Activated CD4-positive, alpha-beta T cell treated with anti-CD3 and anti-CD28 coated beads, Interleukin-2, amount 10 ng/mL, durations not matched to agents 24 days and 14 days (primary cell): ENCODE measurements at regions of chr6 and their contacts with region 1.

Region 1: DNA sequence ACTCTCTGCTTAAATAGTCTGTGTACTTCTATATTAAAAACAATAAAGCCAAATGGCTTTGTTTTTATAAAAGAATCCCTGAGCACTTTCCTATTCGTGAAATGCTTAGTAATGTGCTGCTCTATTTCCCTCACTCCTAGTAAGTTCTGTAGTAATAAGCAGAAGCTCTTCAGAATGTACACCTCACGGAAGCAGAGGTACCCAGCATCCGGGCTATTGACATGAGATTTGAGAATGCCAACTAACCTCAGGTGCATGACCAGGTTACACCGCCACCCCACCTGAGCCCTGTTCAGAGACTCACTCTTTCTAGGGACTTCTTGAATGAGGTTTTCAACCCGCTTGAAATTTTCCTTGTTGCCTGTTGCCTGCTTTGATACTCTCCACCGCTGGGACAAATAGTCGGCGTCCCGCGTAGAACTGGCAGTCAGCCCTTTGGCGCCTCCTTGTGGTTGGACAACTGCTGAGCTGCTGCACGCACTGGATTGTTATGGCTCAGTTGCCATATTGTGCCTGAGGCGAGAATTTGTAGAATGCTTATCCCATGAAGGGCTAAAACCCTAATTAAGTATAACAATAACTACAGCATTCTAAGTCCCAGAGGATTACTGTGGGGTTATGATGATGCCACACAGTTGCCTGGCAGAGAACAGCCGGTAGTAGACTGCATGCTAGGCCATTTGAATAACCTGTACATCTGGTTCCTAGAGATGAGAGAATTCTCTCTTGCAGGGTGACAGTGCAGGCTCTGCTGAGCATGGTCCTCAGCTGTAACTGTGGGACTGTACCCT is 95.4 kb downstream of the KHDC1L start:
- DNase-seq: peak; percentile 95
- H3K4me3 Mint-ChIP-seq: peak overlapping the region; percentile 18
- H3K27ac Mint-ChIP-seq: no peak overlapping the region
- H3K4me1 Mint-ChIP-seq: peaks cover 4% of the 10 kb centered on the region
- H3K27me3 Mint-ChIP-seq: peaks cover 3% of the 10 kb centered on the region

Region 2: GRCh38 chr6:72411872-72412708 is 717.8 kb before region 1 on chr6:
- intact Hi-C with region 1: loop called (anchors 1 kb)
- DNase-seq: peak; percentile 94
- H3K4me3 Mint-ChIP-seq: no peak overlapping the region
- H3K27ac Mint-ChIP-seq: no peak overlapping the region
- H3K4me1 Mint-ChIP-seq: no peaks in the 10 kb centered on the region
- H3K27me3 Mint-ChIP-seq: peaks cover 4% of the 10 kb centered on the region

Region 3: DNA sequence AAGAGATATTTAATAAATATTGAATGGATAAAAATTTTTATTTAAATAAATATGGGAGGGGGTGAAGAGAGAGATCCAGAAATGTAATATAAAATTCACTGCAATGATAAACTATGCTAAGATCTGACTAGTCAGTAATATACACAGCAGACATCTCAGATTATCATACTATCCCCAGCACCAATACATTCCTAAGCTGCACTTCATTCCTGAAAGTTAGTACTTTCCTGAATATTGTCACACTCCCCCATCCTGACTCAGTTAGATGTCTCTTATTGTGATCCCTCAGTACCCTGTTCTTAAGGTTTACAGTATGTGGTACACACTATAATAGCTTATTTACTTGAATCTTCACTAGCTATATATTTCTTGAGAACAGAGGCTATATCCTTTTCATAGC is 596.2 kb before region 1 on chr6:
- intact Hi-C with region 1: loop called (anchors 10 kb)
- DNase-seq: no peak
- H3K4me3 Mint-ChIP-seq: no peak overlapping the region
- H3K27ac Mint-ChIP-seq: no peak overlapping the region
- H3K4me1 Mint-ChIP-seq: no peaks in the 10 kb centered on the region
- H3K27me3 Mint-ChIP-seq: peaks cover 4% of the 10 kb centered on the region

Region 4: GRCh38 chr6:72616406-72617015 is 513.3 kb before region 1 on chr6:
- intact Hi-C with region 1: loop called (anchors 1 kb)
- DNase-seq: peak; percentile 64
- H3K4me3 Mint-ChIP-seq: no peak overlapping the region
- H3K27ac Mint-ChIP-seq: no peak overlapping the region
- H3K4me1 Mint-ChIP-seq: peaks cover 29% of the 10 kb centered on the region
- H3K27me3 Mint-ChIP-seq: no peaks in the 10 kb centered on the region

Region 5: GRCh38 chr6:73329201-73329600 is 199.4 kb after region 1 on chr6:
- intact Hi-C with region 1: loop called (anchors 5 kb)
- DNase-seq: no peak
- H3K4me3 Mint-ChIP-seq: no peak overlapping the region
- H3K27ac Mint-ChIP-seq: no peak overlapping the region
- H3K4me1 Mint-ChIP-seq: no peaks in the 10 kb centered on the region
- H3K27me3 Mint-ChIP-seq: peaks cover 36% of the 10 kb centered on the region